ENCODE measurements at regions of chr17 and their contacts with region 1.

Region 1: GRCh38 chr17:6640536-6641373 is at the starts of genes KIAA0753 and TXNDC17:
- DNase-seq: peak; percentile 96
- ATAC-seq: peak; percentile 98
- total RNA-seq, gene KIAA0753: 5.1 TPM
- total RNA-seq, gene TXNDC17: 52.9 TPM

Region 2: DNA sequence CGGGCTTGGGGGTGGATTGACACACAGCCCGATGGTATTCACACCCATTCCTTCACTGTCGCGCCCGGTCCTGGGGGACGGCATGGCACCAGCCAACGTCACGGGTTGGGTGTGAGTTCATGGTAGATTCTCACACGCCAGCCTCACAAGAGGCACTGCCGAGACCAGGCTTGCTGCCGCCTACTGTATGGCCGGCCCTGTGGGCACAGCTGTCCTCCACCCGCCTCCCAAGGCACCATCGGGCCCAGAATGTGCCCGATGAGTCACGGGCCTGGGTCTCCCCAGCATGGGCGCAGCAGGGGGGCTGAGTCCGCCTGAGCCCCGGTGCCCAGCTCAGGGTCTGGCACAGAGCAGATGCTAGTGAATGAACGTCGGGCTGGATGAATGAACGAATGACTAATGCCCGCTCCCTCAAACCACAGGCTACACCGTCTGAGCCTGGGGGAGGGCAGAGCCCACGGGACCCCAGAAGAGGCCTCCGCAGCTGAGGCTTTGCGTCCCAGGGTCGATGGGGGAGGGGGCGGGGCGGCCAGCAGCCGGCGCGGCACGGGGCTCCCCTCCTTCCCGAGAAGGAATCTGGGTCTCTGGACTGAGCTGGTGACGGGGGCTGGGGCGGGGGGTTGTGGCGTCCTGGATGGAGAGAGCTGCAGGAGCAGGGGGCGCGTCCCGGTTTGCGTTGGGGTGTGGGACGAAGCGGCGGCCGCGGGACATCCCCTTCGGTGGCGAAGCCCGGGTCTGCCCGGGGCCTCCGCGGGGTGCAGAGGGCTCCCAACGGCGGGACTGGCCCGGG is 85.2 kb before region 1 on chr17:
- intact Hi-C with region 1: no loop called
- DNase-seq: no peak
- ATAC-seq: peak; percentile 21

Region 3: GRCh38 chr17:6651357-6651918 is 10.7 kb after region 1 on chr17 and contains the starts of genes C17orf100 and MED31:
- intact Hi-C with region 1: loop called (anchors 1 kb)
- DNase-seq: peak; percentile 98
- ATAC-seq: peak; percentile 100
- total RNA-seq, gene C17orf100: 0.92 TPM
- total RNA-seq, gene MED31: 16.5 TPM

Measured in Right ventricle myocardium inferior (tissue), 1 donor.